B cell (primary cell): ENCODE measurements at regions of chr3 and their contacts with region 1.

Region 1: GRCh38 chr3:133448478-133449122 is 48.7 kb downstream of the BFSP2 start:
- DNase-seq: peak; percentile 90
- ATAC-seq: peak; percentile 88
- H3K4me3 ChIP-seq: no peak overlapping the region
- H3K4me3 Mint-ChIP-seq: peak overlapping the region; percentile 80
- H3K27ac ChIP-seq: peak overlapping the region; percentile 47 to 52
- H3K27ac Mint-ChIP-seq: peak overlapping the region; percentile 90
- H3K4me1 ChIP-seq: peaks cover 35 to 41% of the 10 kb centered on the region in 2 donors
- H3K4me1 Mint-ChIP-seq: peaks cover 49% of the 10 kb centered on the region
- H3K27me3 ChIP-seq: peaks cover 0 to 10% (median 5%) of the 10 kb centered on the region in 4 experiments
- H3K27me3 Mint-ChIP-seq: no peaks in the 10 kb centered on the region
- CTCF ChIP-seq: no peak

Region 2: DNA sequence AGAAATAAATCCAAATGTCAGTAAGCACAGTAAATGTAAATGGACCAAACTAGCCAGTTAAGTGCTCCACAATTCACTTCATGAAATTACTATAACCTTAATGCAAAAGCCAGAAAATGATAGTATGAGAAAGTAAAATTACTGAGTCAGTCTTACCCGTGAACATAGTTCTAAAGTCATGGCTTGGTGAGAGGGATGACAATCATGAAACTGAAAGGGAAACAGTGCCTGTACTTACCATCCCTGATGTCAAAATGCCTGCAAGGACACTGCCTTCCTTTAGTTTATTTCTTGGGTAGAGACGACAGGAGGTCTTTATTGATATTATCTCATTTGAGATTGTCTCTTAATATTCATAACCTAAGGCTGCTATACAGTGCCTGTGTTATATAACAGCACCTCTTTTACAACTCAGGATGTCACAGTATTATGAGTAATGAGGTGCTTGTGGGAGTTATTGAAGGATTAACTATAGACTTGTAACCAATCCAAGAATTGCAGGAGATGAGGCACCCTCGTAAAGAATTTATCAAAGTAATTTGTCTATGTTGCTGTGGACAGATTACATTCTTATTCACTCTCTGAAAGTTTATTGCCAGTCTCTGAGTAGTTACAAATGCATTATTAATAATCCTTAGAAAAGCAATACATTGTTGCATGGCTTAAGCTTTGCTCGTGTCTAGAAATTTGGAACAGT is 191.7 kb before region 1 on chr3:
- CTCF ChIA-PET with region 1: no interaction called
- POLR2A ChIA-PET with region 1: no interaction called
- intact Hi-C with region 1: no loop called
- DNase-seq: no peak
- ATAC-seq: no peak
- H3K4me3 ChIP-seq: no peak overlapping the region
- H3K4me3 Mint-ChIP-seq: no peak overlapping the region
- H3K27ac ChIP-seq: no peak overlapping the region
- H3K27ac Mint-ChIP-seq: no peak overlapping the region
- H3K4me1 ChIP-seq: no peaks in the 10 kb centered on the region
- H3K4me1 Mint-ChIP-seq: no peaks in the 10 kb centered on the region
- H3K27me3 ChIP-seq: peaks cover 0 to 3% (median 0%) of the 10 kb centered on the region in 4 experiments
- H3K27me3 Mint-ChIP-seq: peaks cover 13% of the 10 kb centered on the region
- CTCF ChIP-seq: no peak

Region 3: GRCh38 chr3:133464573-133464972 is 16.0 kb after region 1 on chr3:
- CTCF ChIA-PET with region 1: interaction called, 62 read pairs
- POLR2A ChIA-PET with region 1: interaction called, 5 read pairs
- intact Hi-C with region 1: loop called (anchors 1 kb)
- DNase-seq: no peak
- ATAC-seq: no peak
- H3K4me3 ChIP-seq: no peak overlapping the region
- H3K4me3 Mint-ChIP-seq: no peak overlapping the region
- H3K27ac ChIP-seq: no peak overlapping the region
- H3K27ac Mint-ChIP-seq: peak overlapping the region; percentile 41
- H3K4me1 ChIP-seq: peaks cover 53 to 62% of the 10 kb centered on the region in 2 donors
- H3K4me1 Mint-ChIP-seq: peaks cover 61% of the 10 kb centered on the region
- H3K27me3 ChIP-seq: no peaks in the 10 kb centered on the region
- H3K27me3 Mint-ChIP-seq: no peaks in the 10 kb centered on the region
- CTCF ChIP-seq: peak; percentile 37

Region 4: GRCh38 chr3:133487920-133488540 is 39.4 kb after region 1 on chr3:
- CTCF ChIA-PET with region 1: interaction called, 11 read pairs
- POLR2A ChIA-PET with region 1: interaction called, 3 read pairs
- intact Hi-C with region 1: loop called (anchors 1 kb)
- DNase-seq: peak; percentile 67
- ATAC-seq: no peak
- H3K4me3 ChIP-seq: no peak overlapping the region
- H3K4me3 Mint-ChIP-seq: no peak overlapping the region
- H3K27ac ChIP-seq: no peak overlapping the region
- H3K27ac Mint-ChIP-seq: peak overlapping the region; percentile 41
- H3K4me1 ChIP-seq: peaks cover 24 to 37% of the 10 kb centered on the region in 2 donors
- H3K4me1 Mint-ChIP-seq: peaks cover 49% of the 10 kb centered on the region
- H3K27me3 ChIP-seq: no peaks in the 10 kb centered on the region
- H3K27me3 Mint-ChIP-seq: no peaks in the 10 kb centered on the region
- CTCF ChIP-seq: peak; percentile 66

Region 5: GRCh38 chr3:133535971-133536634 is 87.5 kb after region 1 on chr3:
- CTCF ChIA-PET with region 1: no interaction called
- POLR2A ChIA-PET with region 1: no interaction called
- intact Hi-C with region 1: no loop called
- DNase-seq: no peak
- ATAC-seq: no peak
- H3K4me3 ChIP-seq: no peak overlapping the region
- H3K4me3 Mint-ChIP-seq: no peak overlapping the region
- H3K27ac ChIP-seq: no peak overlapping the region
- H3K27ac Mint-ChIP-seq: no peak overlapping the region
- H3K4me1 ChIP-seq: peaks cover 0 to 5% of the 10 kb centered on the region in 2 donors
- H3K4me1 Mint-ChIP-seq: no peaks in the 10 kb centered on the region
- H3K27me3 ChIP-seq: no peaks in the 10 kb centered on the region
- H3K27me3 Mint-ChIP-seq: no peaks in the 10 kb centered on the region
- CTCF ChIP-seq: no peak

Region 6: DNA sequence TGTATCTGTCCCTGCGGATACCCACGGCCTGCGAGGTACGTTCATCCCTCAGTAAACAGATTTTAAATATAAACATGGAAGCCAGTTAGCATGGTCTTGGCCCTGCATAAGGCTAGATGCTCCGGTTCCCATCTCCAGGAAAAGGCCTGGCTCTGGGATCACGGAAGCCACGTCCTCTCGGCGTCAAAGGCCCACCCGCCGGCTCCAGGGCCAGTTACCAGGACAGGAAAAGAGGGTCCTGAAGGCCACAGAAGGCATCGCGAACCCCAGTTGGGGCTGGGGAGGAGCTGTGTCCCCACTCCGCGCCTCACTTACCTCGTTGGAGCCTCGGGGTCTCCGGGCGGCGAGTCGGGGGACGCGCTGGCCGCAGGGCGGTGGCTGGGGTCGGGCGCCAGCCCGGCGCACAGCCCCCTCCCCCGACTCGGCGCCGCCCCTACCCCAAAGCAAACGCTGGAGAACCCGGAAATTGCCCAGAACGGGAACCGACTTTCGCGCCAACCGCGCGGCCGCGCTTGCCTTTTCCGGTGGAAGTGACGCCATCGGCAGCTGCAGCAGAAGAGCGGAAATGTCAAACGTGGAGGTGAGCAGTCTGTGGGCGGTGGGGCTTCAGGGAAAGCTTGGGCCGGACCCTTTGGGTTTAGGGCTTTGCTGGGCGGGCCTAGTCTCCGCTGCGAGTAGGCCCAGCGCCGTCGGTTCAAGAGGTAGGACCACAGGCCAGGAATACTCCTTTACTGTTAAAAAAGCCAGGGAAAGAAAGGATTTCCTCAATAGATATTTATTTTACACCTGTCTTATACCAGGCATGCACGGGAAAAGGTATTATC is 213.1 kb after region 1 on chr3 and contains the start of gene TOPBP1:
- CTCF ChIA-PET with region 1: no interaction called
- POLR2A ChIA-PET with region 1: no interaction called
- intact Hi-C with region 1: loop called (anchors 5 kb)
- DNase-seq: peak; percentile 88
- ATAC-seq: peak; percentile 84
- H3K4me3 ChIP-seq: peak within 1 kb of the TSS; percentile 74 to 95 (median 91)
- H3K4me3 Mint-ChIP-seq: peak within 1 kb of the TSS; percentile 98
- H3K27ac ChIP-seq: peak within 1 kb of the TSS; percentile 67 to 87
- H3K27ac Mint-ChIP-seq: peak within 1 kb of the TSS; percentile 95
- H3K4me1 ChIP-seq: peaks cover 19 to 26% of the 10 kb centered on the region in 2 donors
- H3K4me1 Mint-ChIP-seq: peaks cover 41% of the 10 kb centered on the region
- H3K27me3 ChIP-seq: no peaks in the 10 kb centered on the region
- H3K27me3 Mint-ChIP-seq: no peaks in the 10 kb centered on the region
- CTCF ChIP-seq: no peak
- total RNA-seq, gene TOPBP1: 47.7 and 53.7 TPM in 2 replicates